Posterior vena cava (tissue), 2 donors: ENCODE measurements at regions of chr2 and their contacts with region 1.

Region 1: DNA sequence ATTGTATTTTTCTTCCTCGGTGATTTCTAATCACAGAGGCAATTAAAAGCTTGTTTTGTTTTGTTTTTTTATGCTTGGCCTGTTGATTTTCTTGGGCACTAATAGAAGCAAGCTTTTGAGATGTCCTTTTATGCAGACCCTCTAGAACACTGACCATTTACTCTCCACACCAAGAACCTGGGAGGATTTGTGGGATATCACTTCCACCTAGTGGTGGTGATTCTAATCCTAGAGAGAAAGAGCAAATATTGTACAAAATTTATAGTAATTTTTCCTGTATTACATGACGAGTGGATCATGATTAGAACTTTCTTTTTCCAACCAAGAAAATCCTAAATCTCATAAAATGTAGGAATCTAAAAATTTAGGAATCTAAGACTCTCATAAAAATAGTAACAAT is 23.4 kb downstream of the NEMP2 start:
- DNase-seq: no peak

Region 2: GRCh38 chr2:190468814-190469569 is 42.1 kb before region 1 on chr2:
- intact Hi-C with region 1: no loop called
- DNase-seq: peak; percentile 84

Region 3: DNA sequence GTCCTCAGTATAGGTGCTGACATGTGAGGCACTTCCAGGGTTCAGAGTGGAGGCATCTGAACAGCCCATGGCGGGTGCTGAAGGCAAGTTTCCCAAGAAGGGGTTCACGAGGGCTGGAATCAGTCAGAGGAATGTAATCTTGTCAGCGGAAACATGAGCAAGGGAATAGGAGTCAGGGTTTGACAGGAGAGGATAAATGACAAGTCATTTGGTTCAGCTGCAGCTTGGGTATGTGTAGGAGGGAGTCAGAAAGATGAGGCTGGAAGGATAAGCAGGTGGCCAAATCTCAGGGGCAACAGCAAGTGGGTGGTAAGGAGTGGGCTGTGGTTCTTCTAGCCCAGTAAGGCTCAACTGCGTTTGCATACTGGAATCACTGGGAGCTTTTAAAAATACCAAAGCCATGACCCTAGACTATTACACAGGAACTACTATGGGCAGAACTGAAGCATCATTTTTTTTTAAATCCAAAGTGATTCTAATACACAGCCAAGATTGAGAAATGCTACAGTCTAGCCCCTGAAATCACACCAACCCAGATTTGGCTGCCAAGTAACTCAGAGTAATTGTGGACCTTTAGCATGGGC is 96.0 kb after region 1 on chr2:
- intact Hi-C with region 1: no loop called
- DNase-seq: no peak

Region 4: GRCh38 chr2:190927301-190927700 is 416.2 kb after region 1 on chr2:
- intact Hi-C with region 1: no loop called
- DNase-seq: no peak

Region 5: DNA sequence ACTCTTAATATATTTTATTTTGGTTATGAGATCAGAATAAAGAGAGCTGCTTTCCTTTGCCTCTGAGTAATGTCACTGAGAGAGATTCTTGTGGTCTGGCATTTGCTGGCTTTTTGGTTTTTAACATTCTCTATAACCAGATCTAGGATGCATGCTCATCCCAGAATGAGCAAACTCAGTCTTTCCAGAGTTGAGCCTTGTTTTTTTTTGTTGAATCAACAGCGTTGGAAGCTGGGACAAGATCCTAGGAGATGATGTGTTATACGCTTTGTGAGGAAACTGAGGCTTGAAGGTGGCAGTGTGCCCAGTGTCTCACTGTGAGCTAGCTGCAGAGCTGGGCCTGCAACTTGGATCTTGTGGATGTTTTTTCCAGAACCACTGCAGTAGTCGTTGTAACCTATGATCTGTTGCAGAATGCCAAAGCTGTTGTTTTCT is 753.6 kb after region 1 on chr2:
- intact Hi-C with region 1: loop called in 1 of 2 experiments (anchors 5 kb)
- DNase-seq: peak; percentile 88